Caco-2 (cell line): ENCODE measurements at regions of chr10 and their contacts with region 1.

Region 1: GRCh38 chr10:92105441-92105840 is 181.9 kb downstream of the BTAF1 start:
- DNase-seq: peak in 1 of 2 experiments; percentile 14
- H3K4me3 ChIP-seq: no peak overlapping the region
- H3K4me3 Mint-ChIP-seq: no peak overlapping the region
- H3K27ac Mint-ChIP-seq: no peak overlapping the region
- H3K4me1 ChIP-seq: peaks cover 7% of the 10 kb centered on the region; the same call in 1 of the 2 replicates
- H3K4me1 Mint-ChIP-seq: peaks cover 14% of the 10 kb centered on the region
- H3K27me3 ChIP-seq: no peaks in the 10 kb centered on the region
- H3K27me3 Mint-ChIP-seq: no peaks in the 10 kb centered on the region
- CTCF ChIP-seq: no peak

Region 2: GRCh38 chr10:92011560-92012214 is 93.8 kb before region 1 on chr10:
- CTCF ChIA-PET with region 1: no interaction called
- POLR2A ChIA-PET with region 1: no interaction called
- intact Hi-C with region 1: no loop called
- DNase-seq: no peak
- H3K4me3 ChIP-seq: no peak overlapping the region
- H3K4me3 Mint-ChIP-seq: no peak overlapping the region
- H3K27ac Mint-ChIP-seq: no peak overlapping the region
- H3K4me1 ChIP-seq: no peaks in the 10 kb centered on the region
- H3K4me1 Mint-ChIP-seq: no peaks in the 10 kb centered on the region
- H3K27me3 ChIP-seq: no peaks in the 10 kb centered on the region
- H3K27me3 Mint-ChIP-seq: no peaks in the 10 kb centered on the region
- CTCF ChIP-seq: no peak

Region 3: GRCh38 chr10:92080244-92080643 is 25.2 kb before region 1 on chr10:
- CTCF ChIA-PET with region 1: no interaction called
- POLR2A ChIA-PET with region 1: no interaction called
- intact Hi-C with region 1: no loop called
- DNase-seq: peak in 1 of 2 experiments; percentile 8
- H3K4me3 ChIP-seq: no peak overlapping the region
- H3K4me3 Mint-ChIP-seq: no peak overlapping the region
- H3K27ac Mint-ChIP-seq: no peak overlapping the region
- H3K4me1 ChIP-seq: peaks cover 13% of the 10 kb centered on the region; the same call in 1 of the 2 replicates
- H3K4me1 Mint-ChIP-seq: peaks cover 11% of the 10 kb centered on the region
- H3K27me3 ChIP-seq: no peaks in the 10 kb centered on the region
- H3K27me3 Mint-ChIP-seq: no peaks in the 10 kb centered on the region
- CTCF ChIP-seq: no peak

Region 4: DNA sequence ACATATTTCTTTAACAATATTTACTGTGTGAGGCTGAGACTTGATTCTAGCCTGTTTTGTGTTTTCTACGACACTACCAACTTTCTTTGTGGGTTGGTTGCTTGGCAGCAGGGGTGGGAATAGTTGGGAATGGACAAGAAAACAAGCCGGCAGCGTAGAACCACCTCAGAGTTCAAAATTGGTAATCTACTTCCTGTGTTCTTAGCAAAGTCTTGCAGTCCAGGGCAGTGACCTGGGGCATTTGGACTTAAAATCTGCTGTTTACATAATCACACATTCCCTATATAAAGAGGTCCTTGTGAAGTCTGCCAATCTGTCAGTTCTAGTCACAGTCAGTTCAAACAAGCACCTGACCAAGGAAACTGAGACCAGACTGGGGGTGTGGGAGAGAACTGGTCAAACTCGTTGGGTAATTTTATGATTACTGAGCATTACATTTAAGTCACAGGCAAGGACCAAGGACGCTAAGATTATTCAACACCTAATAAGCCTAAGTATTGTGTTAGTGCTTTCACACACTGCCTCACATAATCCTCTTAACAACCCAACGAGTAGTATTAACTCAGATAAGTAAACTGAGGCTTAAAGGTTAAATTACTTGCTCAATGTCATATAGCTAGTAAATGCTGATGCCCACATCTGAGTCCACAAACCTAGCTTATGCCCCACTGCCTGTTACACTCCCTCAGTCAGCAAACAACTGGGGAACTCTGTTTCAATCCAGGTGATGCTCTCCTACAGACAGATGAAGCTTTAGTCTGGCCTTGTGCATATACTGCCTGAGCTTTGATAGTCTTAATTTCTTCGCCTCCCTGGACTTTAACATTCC is 17.7 kb after region 1 on chr10:
- CTCF ChIA-PET with region 1: no interaction called
- POLR2A ChIA-PET with region 1: no interaction called
- intact Hi-C with region 1: loop called (anchors 1 kb)
- DNase-seq: peak; percentile 42 to 53
- H3K4me3 ChIP-seq: no peak overlapping the region
- H3K4me3 Mint-ChIP-seq: no peak overlapping the region
- H3K27ac Mint-ChIP-seq: peak overlapping the region; percentile 9
- H3K4me1 ChIP-seq: peaks cover 20% of the 10 kb centered on the region
- H3K4me1 Mint-ChIP-seq: peaks cover 18% of the 10 kb centered on the region
- H3K27me3 ChIP-seq: no peaks in the 10 kb centered on the region
- H3K27me3 Mint-ChIP-seq: no peaks in the 10 kb centered on the region
- CTCF ChIP-seq: no peak